CD14-positive monocyte (primary cell): ENCODE measurements at regions of chr18 and their contacts with region 1.

Region 1: GRCh38 chr18:62522504-62523254 is at the start of gene ZCCHC2:
- DNase-seq: peak; percentile 94 to 98 (median 96)
- H3K4me3 ChIP-seq: peak within 1 kb of the TSS; percentile 88 to 93 (median 90)
- H3K4me3 Mint-ChIP-seq: peak within 1 kb of the TSS; percentile 88 to 97
- H3K27ac ChIP-seq: peak within 1 kb of the TSS; percentile 83 to 85
- H3K27ac Mint-ChIP-seq: peak within 1 kb of the TSS; percentile 70 to 90 (median 86)
- H3K4me1 ChIP-seq: peaks cover 26 to 38% of the 10 kb centered on the region in 2 donors
- H3K4me1 Mint-ChIP-seq: peaks cover 31% of the 10 kb centered on the region
- H3K27me3 ChIP-seq: peaks cover 0 to 5% of the 10 kb centered on the region in 2 donors
- H3K27me3 Mint-ChIP-seq: peaks cover 0 to 10% (median 4%) of the 10 kb centered on the region in 3 donors
- CTCF ChIP-seq: no peak
- polyA plus RNA-seq, gene ZCCHC2: 0.59 to 24.9 (median 0.71) TPM

Region 2: GRCh38 chr18:62186774-62187542 is 335.7 kb before region 1 on chr18 and contains the starts of genes PIGN and RELCH:
- intact Hi-C with region 1: loop called (anchors 5 to 10 kb)
- DNase-seq: peak; percentile 97 to 98 (median 97)
- H3K4me3 ChIP-seq: peak within 1 kb of the TSS; percentile 89 to 100 (median 90)
- H3K4me3 Mint-ChIP-seq: peak within 1 kb of the TSS; percentile 99 to 100
- H3K27ac ChIP-seq: peak within 1 kb of the TSS; percentile 71 to 95
- H3K27ac Mint-ChIP-seq: peak within 1 kb of the TSS; percentile 94 to 98 (median 97)
- H3K4me1 ChIP-seq: peaks cover 36 to 58% of the 10 kb centered on the region in 2 donors
- H3K4me1 Mint-ChIP-seq: peaks cover 60% of the 10 kb centered on the region
- H3K27me3 ChIP-seq: no peaks in the 10 kb centered on the region
- H3K27me3 Mint-ChIP-seq: no peaks in the 10 kb centered on the region
- CTCF ChIP-seq: no peak
- polyA plus RNA-seq, gene PIGN: 4.1 to 14.7 (median 14.6) TPM
- polyA plus RNA-seq, gene RELCH: 3.8 to 30.4 (median 4.9) TPM

Region 3: DNA sequence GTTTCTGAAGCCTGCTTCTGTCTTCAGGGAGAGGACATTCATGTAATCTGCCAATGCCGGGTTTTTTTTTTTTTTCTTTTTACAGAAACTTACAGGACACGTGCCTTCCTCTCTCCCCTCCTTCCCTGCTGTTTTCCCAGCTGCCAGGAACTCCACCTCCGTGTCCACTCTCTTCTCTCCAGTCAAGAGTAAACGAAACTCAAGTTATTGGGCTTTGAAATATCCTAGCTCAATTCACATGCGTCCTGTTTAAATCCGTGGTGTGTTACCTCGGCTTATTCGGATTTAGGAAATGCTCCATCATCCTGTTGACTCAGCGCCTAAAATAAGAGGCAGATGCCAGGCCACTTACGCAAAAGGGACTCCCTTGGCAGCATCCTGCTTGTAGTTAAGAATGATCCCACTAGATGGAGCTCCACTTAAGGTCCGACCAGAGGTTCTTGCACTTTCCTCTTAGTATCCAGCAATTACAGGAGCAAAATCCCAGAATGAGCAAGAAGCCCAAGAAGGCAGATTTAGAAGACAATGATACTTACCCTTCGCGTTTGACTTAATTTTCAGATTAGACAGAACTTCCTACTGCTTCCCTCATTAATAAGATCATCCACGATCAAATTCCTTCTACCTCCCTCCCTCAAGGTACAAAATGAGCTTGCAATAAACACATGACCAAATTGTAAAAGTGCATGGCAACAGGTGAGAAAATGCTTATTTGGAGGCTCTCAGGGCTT is 97.0 kb before region 1 on chr18:
- intact Hi-C with region 1: loop called (anchors 5 kb)
- DNase-seq: peak; percentile 90 to 95 (median 94)
- H3K4me3 ChIP-seq: peak overlapping the region in 1 of 3 experiments; percentile 39
- H3K4me3 Mint-ChIP-seq: peak overlapping the region; percentile 48 to 89
- H3K27ac ChIP-seq: peak overlapping the region in 1 of 2 donors; percentile 20
- H3K27ac Mint-ChIP-seq: peak overlapping the region; percentile 63 to 88 (median 83)
- H3K4me1 ChIP-seq: peaks cover 26 to 32% of the 10 kb centered on the region in 2 donors
- H3K4me1 Mint-ChIP-seq: peaks cover 29% of the 10 kb centered on the region
- H3K27me3 ChIP-seq: no peaks in the 10 kb centered on the region
- H3K27me3 Mint-ChIP-seq: peaks cover 1 to 4% (median 3%) of the 10 kb centered on the region in 3 donors
- CTCF ChIP-seq: peak; percentile 87

Region 4: GRCh38 chr18:62450546-62451406 is 71.9 kb before region 1 on chr18:
- intact Hi-C with region 1: loop called in 1 of 2 experiments (anchors 10 kb)
- DNase-seq: peak; percentile 81 to 94 (median 87)
- H3K4me3 ChIP-seq: peak overlapping the region in 2 of 3 experiments; percentile 21 to 63
- H3K4me3 Mint-ChIP-seq: peak overlapping the region; percentile 55 to 75
- H3K27ac ChIP-seq: peak overlapping the region; percentile 41 to 87
- H3K27ac Mint-ChIP-seq: peak overlapping the region; percentile 83 to 92 (median 90)
- H3K4me1 ChIP-seq: peaks cover 46 to 53% of the 10 kb centered on the region in 2 donors
- H3K4me1 Mint-ChIP-seq: peaks cover 41% of the 10 kb centered on the region
- H3K27me3 ChIP-seq: no peaks in the 10 kb centered on the region
- H3K27me3 Mint-ChIP-seq: peaks cover 0 to 6% (median 2%) of the 10 kb centered on the region in 3 donors
- CTCF ChIP-seq: no peak

Region 5: GRCh38 chr18:62564044-62564443 is 41.4 kb after region 1 on chr18:
- intact Hi-C with region 1: loop called in 1 of 2 experiments (anchors 5 kb)
- DNase-seq: no peak
- H3K4me3 ChIP-seq: no peak overlapping the region
- H3K4me3 Mint-ChIP-seq: no peak overlapping the region
- H3K27ac ChIP-seq: no peak overlapping the region
- H3K27ac Mint-ChIP-seq: no peak overlapping the region
- H3K4me1 ChIP-seq: no peaks in the 10 kb centered on the region
- H3K4me1 Mint-ChIP-seq: peaks cover 3% of the 10 kb centered on the region
- H3K27me3 ChIP-seq: no peaks in the 10 kb centered on the region
- H3K27me3 Mint-ChIP-seq: no peaks in the 10 kb centered on the region
- CTCF ChIP-seq: no peak

Region 6: GRCh38 chr18:62584241-62585120 is 61.8 kb after region 1 on chr18:
- intact Hi-C with region 1: no loop called
- DNase-seq: peak; percentile 72 to 82 (median 73)
- H3K4me3 ChIP-seq: peak overlapping the region in 1 of 3 experiments; percentile 52
- H3K4me3 Mint-ChIP-seq: peak overlapping the region; percentile 48 to 71
- H3K27ac ChIP-seq: peak overlapping the region; percentile 11 to 32
- H3K27ac Mint-ChIP-seq: peak overlapping the region in 3 of 7 donors; percentile 70 to 80 (median 70)
- H3K4me1 ChIP-seq: peaks cover 12 to 23% of the 10 kb centered on the region in 2 donors
- H3K4me1 Mint-ChIP-seq: peaks cover 30% of the 10 kb centered on the region
- H3K27me3 ChIP-seq: no peaks in the 10 kb centered on the region
- H3K27me3 Mint-ChIP-seq: peaks cover under 1 to 7% (median 4%) of the 10 kb centered on the region in 3 donors
- CTCF ChIP-seq: peak; percentile 94

Region 7: GRCh38 chr18:63141778-63142176 is 619.1 kb after region 1 on chr18:
- intact Hi-C with region 1: no loop called
- DNase-seq: peak; percentile 46 to 59 (median 57)
- H3K4me3 ChIP-seq: peak overlapping the region in 1 of 3 experiments; percentile 26
- H3K4me3 Mint-ChIP-seq: peak overlapping the region; percentile 40 to 83
- H3K27ac ChIP-seq: no peak overlapping the region
- H3K27ac Mint-ChIP-seq: peak overlapping the region in 6 of 7 donors; percentile 22 to 79 (median 54)
- H3K4me1 ChIP-seq: peaks cover 46 to 47% of the 10 kb centered on the region in 2 donors
- H3K4me1 Mint-ChIP-seq: peaks cover 57% of the 10 kb centered on the region
- H3K27me3 ChIP-seq: no peaks in the 10 kb centered on the region
- H3K27me3 Mint-ChIP-seq: peaks cover 0 to 6% (median 0%) of the 10 kb centered on the region in 3 donors
- CTCF ChIP-seq: no peak